ENCODE measurements at regions of chr17 and their contacts with region 1.

Region 1: GRCh38 chr17:77957857-77958715 is at the start of gene TNRC6C:
- DNase-seq: peak; percentile 97
- H3K4me3 ChIP-seq: peak within 1 kb of the TSS; percentile 77
- H3K27ac ChIP-seq: no peak within 1 kb of the TSS
- H3K27me3 ChIP-seq: peaks cover 32% of the 10 kb centered on the region
- CTCF ChIP-seq: no peak; the same call in 1 of the 2 replicates
- polyA plus RNA-seq, gene TNRC6C: 1.2 and 2.2 TPM in 2 replicates

Region 2: DNA sequence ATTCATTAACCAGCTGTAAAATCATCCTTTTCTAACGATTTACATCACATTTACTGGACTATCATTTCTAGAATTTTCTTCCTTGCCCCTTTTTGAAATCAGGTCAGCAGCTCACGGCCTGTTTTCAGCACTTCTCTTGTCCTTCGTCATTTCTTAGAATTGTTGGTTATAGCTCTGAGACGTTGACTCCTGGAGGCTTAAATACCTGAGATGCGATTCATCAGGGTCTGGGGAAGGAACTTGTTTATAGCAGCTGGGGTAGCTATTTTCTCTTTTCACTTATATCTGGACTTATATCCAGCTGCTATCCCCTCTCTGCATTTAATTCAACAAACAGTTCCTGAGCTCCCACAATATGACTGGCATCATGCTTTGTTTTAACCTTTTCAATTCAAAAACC is 338.2 kb before region 1 on chr17:
- CTCF ChIA-PET with region 1: no interaction called
- POLR2A ChIA-PET with region 1: no interaction called
- DNase-seq: peak; percentile 45
- H3K4me3 ChIP-seq: no peak overlapping the region
- H3K27ac ChIP-seq: peak overlapping the region; percentile 31
- H3K27me3 ChIP-seq: no peaks in the 10 kb centered on the region
- CTCF ChIP-seq: no peak

Region 3: GRCh38 chr17:77887464-77888241 is 70.4 kb before region 1 on chr17:
- CTCF ChIA-PET with region 1: no interaction called
- POLR2A ChIA-PET with region 1: interaction called, 10 read pairs
- DNase-seq: peak; percentile 16
- H3K4me3 ChIP-seq: peak overlapping the region; percentile 69
- H3K27ac ChIP-seq: no peak overlapping the region
- H3K27me3 ChIP-seq: peaks cover 27% of the 10 kb centered on the region
- CTCF ChIP-seq: no peak

Region 4: DNA sequence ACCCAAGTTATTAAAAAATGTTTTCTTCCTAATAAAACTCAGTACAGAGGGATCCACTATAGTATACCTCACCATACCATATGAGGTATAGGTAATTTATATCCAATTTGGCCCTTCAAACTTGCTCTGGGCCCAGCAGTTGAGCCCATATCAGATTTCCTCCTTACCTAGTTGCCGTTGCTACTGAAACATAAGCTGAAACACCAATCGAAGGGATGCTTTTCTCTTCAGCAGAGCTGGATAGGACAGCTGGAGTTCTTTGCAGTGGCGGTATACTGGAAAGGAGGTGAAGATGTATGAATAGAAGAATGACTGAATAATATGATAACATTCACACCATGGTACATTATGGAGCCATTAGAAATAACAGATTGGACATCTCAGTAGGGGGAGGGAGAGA is 43.1 kb after region 1 on chr17:
- CTCF ChIA-PET with region 1: no interaction called
- POLR2A ChIA-PET with region 1: interaction called, 10 read pairs
- DNase-seq: no peak
- H3K4me3 ChIP-seq: no peak overlapping the region
- H3K27ac ChIP-seq: no peak overlapping the region
- H3K27me3 ChIP-seq: no peaks in the 10 kb centered on the region
- CTCF ChIP-seq: no peak

Region 5: DNA sequence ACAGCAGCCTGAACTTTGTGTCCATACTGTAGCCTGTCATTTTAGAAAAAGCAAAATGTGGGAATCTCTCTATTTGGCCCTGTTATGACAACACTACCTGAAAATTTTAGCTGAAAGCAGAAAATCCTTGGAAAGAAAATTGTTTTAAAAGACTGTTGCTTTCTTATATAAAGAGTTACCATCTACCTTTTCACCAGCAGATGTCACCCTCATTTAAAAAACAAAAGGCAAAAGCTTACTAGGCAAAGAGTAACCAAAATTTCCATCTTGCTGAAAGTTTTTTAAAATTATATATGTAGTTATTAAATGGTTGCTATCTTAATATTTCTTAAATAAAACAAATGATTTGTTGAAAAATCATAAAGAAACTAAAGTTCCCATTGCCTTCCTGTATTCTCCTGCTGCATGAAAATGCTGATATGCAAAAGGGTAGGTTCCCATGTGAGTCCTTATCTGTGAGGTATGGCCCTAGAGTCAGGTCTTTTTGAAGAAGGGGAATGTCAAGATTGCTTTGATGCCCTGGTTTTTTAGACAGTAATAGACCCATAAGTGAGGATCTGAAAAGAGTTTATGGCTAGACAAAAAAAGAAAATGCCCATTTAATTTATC is 61.4 kb after region 1 on chr17:
- CTCF ChIA-PET with region 1: interaction called, 28 read pairs
- POLR2A ChIA-PET with region 1: interaction called, 18 read pairs
- DNase-seq: no peak
- H3K4me3 ChIP-seq: no peak overlapping the region
- H3K27ac ChIP-seq: no peak overlapping the region
- H3K27me3 ChIP-seq: no peaks in the 10 kb centered on the region
- CTCF ChIP-seq: peak; percentile 65